CD8-positive, alpha-beta memory T cell (primary cell): ENCODE measurements at regions of chr17 and their contacts with region 1.

Region 1: GRCh38 chr17:41548844-41549595 is 20.9 kb upstream of the KRT19 start:
- DNase-seq: peak; percentile 73 to 86 (median 76)
- H3K4me3 ChIP-seq: peak overlapping the region; percentile 19
- H3K4me3 Mint-ChIP-seq: peak overlapping the region; percentile 0 to 64 (median 48)
- H3K27ac ChIP-seq: peak overlapping the region; percentile 32
- H3K27ac Mint-ChIP-seq: peak overlapping the region in 7 of 8 donors; percentile 1 to 83 (median 75)
- H3K4me1 ChIP-seq: peaks cover 13% of the 10 kb centered on the region
- H3K4me1 Mint-ChIP-seq: peaks cover 11 to 16% (median 15%) of the 10 kb centered on the region in 3 donors
- H3K27me3 ChIP-seq: no peaks in the 10 kb centered on the region
- H3K27me3 Mint-ChIP-seq: peaks cover 12 to 17% of the 10 kb centered on the region in 2 donors

Region 2: DNA sequence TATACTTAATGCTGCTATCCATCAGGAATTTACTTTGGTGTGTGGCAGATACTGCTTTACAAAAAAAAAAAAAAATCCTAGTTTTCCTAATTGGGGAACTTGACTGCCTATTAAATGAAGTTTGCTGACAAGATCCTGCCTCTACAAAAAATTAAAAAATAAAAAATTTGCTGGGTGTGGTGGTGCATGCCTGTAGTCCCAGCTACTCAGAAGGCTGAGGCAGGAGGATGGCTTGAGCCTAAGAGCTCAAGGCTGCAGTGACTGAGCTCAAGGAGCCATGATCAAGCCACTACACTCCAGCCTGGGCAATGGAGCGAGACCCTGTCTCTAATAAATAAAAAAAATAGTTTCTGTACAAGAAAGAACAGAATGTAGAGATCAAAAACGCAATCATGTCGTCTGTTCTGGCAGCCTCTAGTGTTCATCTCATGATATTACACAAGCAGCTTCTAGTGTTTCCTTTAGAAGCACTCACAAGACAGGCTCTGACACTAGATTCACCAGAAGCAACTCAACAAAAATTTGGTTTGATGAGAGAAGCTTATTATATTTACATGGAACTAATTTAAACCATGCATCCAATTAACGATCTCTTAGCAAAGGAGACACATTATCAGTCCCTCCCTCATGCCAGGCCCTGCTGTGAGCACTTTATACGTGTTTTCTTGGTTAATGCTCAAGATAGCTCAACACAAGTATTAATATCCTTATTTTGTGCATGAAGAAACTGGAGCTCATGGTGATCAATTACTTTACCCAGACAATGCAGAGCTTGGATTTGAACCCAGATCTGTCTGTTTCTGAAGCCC is 226.7 kb before region 1 on chr17:
- CTCF ChIA-PET with region 1: interaction called, 12 read pairs
- POLR2A ChIA-PET with region 1: no interaction called
- DNase-seq: peak in 2 of 5 donors; percentile 46 to 61
- H3K4me3 ChIP-seq: no peak overlapping the region
- H3K4me3 Mint-ChIP-seq: no peak overlapping the region
- H3K27ac ChIP-seq: no peak overlapping the region
- H3K27ac Mint-ChIP-seq: peak overlapping the region in 6 of 8 donors; percentile 71 to 96 (median 82)
- H3K4me1 ChIP-seq: peaks cover 37% of the 10 kb centered on the region
- H3K4me1 Mint-ChIP-seq: peaks cover 40 to 62% (median 54%) of the 10 kb centered on the region in 3 donors
- H3K27me3 ChIP-seq: no peaks in the 10 kb centered on the region
- H3K27me3 Mint-ChIP-seq: no peaks in the 10 kb centered on the region

Region 3: DNA sequence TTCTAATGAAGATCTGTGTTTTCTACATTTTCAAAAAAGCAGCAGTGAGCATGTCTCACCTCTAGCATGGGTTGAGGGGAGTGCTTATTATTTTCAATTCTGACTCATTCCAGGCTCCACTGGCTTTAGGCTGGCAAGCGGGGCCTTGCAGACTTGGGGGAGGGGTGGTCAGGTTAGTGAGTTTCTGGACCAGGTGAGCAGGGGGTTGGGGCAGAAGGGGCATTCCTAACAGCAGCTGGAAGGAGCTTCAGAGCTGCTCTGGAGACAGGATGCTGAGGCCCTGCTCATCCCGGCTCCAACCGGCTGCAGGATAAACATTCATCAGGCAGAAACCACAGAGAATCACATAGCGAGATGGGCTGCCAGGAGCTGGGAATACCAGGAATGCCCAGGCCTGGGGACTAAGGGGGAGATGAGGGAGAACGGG is 10.4 kb before region 1 on chr17:
- CTCF ChIA-PET with region 1: interaction called, 10 read pairs
- POLR2A ChIA-PET with region 1: no interaction called
- DNase-seq: peak in 1 of 5 donors; percentile 21
- H3K4me3 ChIP-seq: no peak overlapping the region
- H3K4me3 Mint-ChIP-seq: no peak overlapping the region
- H3K27ac ChIP-seq: no peak overlapping the region
- H3K27ac Mint-ChIP-seq: no peak overlapping the region
- H3K4me1 ChIP-seq: no peaks in the 10 kb centered on the region
- H3K4me1 Mint-ChIP-seq: no peaks in the 10 kb centered on the region
- H3K27me3 ChIP-seq: no peaks in the 10 kb centered on the region
- H3K27me3 Mint-ChIP-seq: peaks cover 13 to 40% of the 10 kb centered on the region in 2 donors

Region 4: DNA sequence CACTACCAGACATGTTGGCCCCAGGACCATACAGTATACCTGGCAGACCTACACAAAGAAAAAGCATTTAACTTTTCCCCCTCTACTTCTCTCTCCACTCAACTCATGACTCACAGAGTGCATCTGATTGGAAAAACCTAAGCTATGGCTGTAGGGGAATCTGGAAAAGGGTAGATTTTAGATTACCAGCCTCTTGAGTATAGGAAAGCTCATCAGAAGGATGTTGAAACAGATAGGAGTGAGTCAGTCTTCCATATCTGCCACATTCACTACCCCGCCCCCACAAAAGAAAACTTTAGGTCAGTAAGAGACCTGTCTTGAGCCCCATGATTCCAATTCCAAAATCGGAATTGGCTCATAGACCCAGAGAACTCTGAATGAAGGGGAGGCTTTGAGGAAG is 10.5 kb after region 1 on chr17:
- CTCF ChIA-PET with region 1: interaction called, 12 read pairs
- POLR2A ChIA-PET with region 1: no interaction called
- DNase-seq: no peak
- H3K4me3 ChIP-seq: no peak overlapping the region
- H3K4me3 Mint-ChIP-seq: no peak overlapping the region
- H3K27ac ChIP-seq: no peak overlapping the region
- H3K27ac Mint-ChIP-seq: no peak overlapping the region
- H3K4me1 ChIP-seq: no peaks in the 10 kb centered on the region
- H3K4me1 Mint-ChIP-seq: no peaks in the 10 kb centered on the region
- H3K27me3 ChIP-seq: peaks cover 9% of the 10 kb centered on the region
- H3K27me3 Mint-ChIP-seq: peaks cover 21 to 68% of the 10 kb centered on the region in 2 donors